Mammary epithelial cell (primary cell): ENCODE measurements at regions of chr20 and their contacts with region 1.

Region 1: DNA sequence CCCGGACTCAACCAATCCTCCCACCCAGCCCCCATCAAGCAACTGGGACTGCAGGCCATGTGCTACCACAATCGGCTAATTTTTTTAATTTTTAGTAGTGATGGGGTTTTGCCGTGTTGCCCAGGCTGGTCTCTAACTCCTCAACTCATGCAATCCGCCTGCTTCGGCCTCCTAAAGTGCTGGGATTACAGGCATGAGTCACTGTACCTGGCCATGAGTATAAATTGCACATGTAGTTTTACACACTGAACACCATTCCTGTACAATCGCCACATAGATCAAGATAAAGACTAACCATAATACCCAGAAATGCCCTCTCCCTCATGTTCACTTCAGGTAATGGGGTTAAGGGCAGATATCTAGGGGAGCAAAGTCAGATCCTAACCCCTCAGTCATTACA is 26.4 kb downstream of the TRPC4AP start:
- DNase-seq: no peak
- H3K4me3 ChIP-seq: no peak overlapping the region
- H3K27ac ChIP-seq: no peak overlapping the region
- H3K4me1 ChIP-seq: no peaks in the 10 kb centered on the region
- H3K27me3 ChIP-seq: no peaks in the 10 kb centered on the region
- CTCF ChIP-seq: no peak

Region 2: DNA sequence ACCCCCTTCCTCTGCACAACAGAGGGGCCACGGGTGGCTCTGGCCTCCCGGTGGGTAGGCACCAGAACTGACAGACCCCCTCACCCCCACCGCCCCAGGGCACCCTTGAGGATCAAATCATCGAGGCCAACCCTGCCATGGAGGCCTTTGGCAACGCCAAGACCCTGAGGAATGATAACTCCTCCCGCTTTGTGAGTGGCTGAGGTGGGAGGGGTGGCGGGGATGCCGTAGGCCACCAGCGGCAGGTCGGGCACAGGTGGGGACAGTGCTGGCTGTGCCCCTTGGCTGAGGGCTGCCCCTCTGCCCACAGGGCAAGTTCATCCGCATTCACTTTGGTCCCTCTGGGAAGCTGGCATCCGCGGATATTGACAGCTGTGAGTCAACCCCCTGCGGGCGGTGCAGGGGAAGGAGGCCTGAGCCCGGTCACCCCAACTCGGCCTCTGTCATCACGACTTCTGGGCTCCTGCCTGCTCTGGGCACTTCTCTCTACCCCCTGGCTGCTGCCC is 81.4 kb before region 1 on chr20:
- CTCF ChIA-PET with region 1: no interaction called
- dilution Hi-C with region 1: loop called (anchors 5 kb)
- in situ Hi-C with region 1: no loop called
- intact Hi-C with region 1: no loop called
- DNase-seq: no peak
- H3K4me3 ChIP-seq: no peak overlapping the region
- H3K27ac ChIP-seq: no peak overlapping the region
- H3K4me1 ChIP-seq: peaks cover 6% of the 10 kb centered on the region
- H3K27me3 ChIP-seq: peaks cover 2% of the 10 kb centered on the region
- CTCF ChIP-seq: peak in 1 of 2 donors; percentile 20

Region 3: GRCh38 chr20:35174458-35175216 is 108.4 kb after region 1 on chr20:
- CTCF ChIA-PET with region 1: no interaction called
- dilution Hi-C with region 1: no loop called
- in situ Hi-C with region 1: no loop called
- intact Hi-C with region 1: no loop called
- DNase-seq: no peak
- H3K4me3 ChIP-seq: no peak overlapping the region
- H3K27ac ChIP-seq: no peak overlapping the region
- H3K4me1 ChIP-seq: peaks cover 17% of the 10 kb centered on the region
- H3K27me3 ChIP-seq: no peaks in the 10 kb centered on the region
- CTCF ChIP-seq: no peak

Region 4: DNA sequence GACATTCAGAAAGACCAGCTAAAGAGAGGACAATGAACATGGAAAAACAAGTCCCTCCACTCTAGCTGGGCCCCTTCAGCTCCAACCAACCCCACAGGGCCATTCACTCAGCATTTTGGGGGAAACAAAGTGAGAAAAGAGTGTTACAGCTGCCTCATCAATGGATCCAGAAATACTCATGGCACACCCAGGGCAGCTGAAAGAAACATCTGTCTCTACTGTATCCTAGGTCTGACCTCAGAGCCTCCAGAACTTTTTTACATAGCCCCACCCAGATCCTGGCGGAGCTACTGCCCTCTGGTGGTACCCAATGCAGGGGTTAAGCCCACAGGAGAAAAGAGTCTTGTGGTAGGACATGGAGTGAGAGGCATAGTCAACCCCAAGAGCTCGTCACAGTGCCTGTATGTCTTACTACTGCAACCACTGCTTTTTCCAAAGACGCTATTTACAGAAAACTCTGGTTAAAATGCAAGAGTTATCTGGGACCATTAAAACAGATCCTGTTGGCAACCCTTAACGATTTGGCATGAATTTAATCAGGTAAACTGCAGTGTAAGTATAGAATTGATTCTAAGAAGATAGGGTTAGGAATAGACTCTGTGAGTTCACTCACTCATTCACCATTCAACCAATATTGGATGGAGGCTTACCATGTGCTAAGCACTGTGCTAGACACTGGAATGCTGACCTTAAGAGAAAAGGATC is 263.4 kb after region 1 on chr20:
- CTCF ChIA-PET with region 1: no interaction called
- dilution Hi-C with region 1: no loop called
- in situ Hi-C with region 1: no loop called
- intact Hi-C with region 1: no loop called
- DNase-seq: peak; percentile 31
- H3K4me3 ChIP-seq: no peak overlapping the region
- H3K27ac ChIP-seq: peak overlapping the region; percentile 14
- H3K4me1 ChIP-seq: peaks cover 24% of the 10 kb centered on the region
- H3K27me3 ChIP-seq: no peaks in the 10 kb centered on the region
- CTCF ChIP-seq: peak; percentile 61 to 65